Heart left ventricle (tissue), 16 donors: ENCODE measurements at regions of chr5 and their contacts with region 1.

Region 1: GRCh38 chr5:66144074-66144833 is at the start of gene SREK1:
- DNase-seq: peak; percentile 91 to 96 (median 94)
- ATAC-seq: peak; percentile 95 to 98 (median 96)
- H3K4me3 ChIP-seq: peak within 1 kb of the TSS; percentile 70 to 95 (median 84)
- H3K27ac ChIP-seq: peak within 1 kb of the TSS; percentile 95 to 100 (median 99)
- H3K4me1 ChIP-seq: peaks cover 4 to 44% (median 32%) of the 10 kb centered on the region in 12 donors
- H3K27me3 ChIP-seq: no peaks in the 10 kb centered on the region
- CTCF ChIP-seq: no peak
- POLR2A ChIP-seq: peak in 1 of 2 donors; percentile 76
- total RNA-seq, gene SREK1: 13.5 to 34.2 (median 28.4) TPM

Region 2: DNA sequence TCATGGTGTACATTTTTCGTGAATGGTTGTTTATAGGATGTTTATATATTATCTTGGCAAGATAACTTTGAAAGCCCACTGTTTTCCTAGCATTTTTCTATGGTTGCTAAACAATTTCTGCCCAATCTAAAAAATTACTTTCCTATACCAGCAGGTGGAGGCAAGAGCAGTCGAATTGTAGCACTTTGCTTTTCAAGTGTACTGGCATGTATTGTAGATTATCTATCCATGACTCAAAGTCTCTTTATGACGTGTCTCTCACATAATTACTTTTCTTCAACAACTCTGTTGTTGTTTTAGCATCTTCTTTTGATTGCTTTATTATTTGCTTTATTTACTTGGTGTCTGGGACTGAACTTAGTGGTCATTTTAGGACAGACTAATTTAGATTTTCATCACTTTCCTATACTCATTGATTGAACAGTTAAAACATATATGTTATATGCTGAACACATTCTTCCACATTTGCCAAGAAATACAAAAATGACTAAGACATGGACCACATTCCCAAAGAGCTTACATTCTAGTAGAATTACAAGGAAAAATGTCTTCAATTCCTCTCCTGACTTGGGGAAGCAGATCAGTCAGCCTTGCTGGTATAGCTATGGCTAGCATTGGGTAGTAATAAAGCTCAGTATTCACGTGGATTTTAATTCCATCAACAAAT is 401.6 kb before region 1 on chr5:
- intact Hi-C with region 1: loop called in 1 of 10 experiments (anchors 5 kb)
- DNase-seq: no peak
- ATAC-seq: peak in 1 of 4 donors; percentile 73
- H3K4me3 ChIP-seq: no peak overlapping the region
- H3K27ac ChIP-seq: no peak overlapping the region
- H3K4me1 ChIP-seq: peaks cover 0 to 5% (median 0%) of the 10 kb centered on the region in 12 donors
- H3K27me3 ChIP-seq: no peaks in the 10 kb centered on the region
- CTCF ChIP-seq: peak; percentile 30 to 61 (median 52)
- POLR2A ChIP-seq: no peak